IMR-90 (cell line): ENCODE measurements at regions of chr21 and their contacts with region 1.

Region 1: DNA sequence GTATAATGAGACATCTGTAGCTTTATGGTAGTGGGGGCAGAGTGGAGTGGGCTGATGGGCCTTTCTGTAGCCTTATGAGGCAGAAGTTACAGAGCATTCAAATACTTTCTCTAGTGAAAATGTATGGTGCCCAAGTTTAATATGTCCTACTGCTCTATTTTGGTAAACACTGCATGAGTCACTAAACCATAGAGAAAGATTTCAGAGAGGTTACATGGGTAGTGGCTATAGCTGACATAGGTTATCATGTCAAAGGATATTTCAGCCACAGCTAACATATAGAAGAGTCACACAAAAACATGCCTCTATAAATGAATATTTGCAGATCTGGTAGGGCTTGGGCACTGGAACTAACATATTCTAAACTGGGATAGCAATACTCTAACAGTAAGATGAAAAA is 212.4 kb upstream of the USP25 start:
- DNase-seq: no peak
- ATAC-seq: no peak
- H3K4me3 ChIP-seq: no peak overlapping the region
- H3K27ac ChIP-seq: no peak overlapping the region
- H3K4me1 ChIP-seq: no peaks in the 10 kb centered on the region
- H3K27me3 ChIP-seq: no peaks in the 10 kb centered on the region
- CTCF ChIP-seq: no peak
- POLR2A ChIP-seq: no peak
- RAD21 ChIP-seq: no peak

Region 2: DNA sequence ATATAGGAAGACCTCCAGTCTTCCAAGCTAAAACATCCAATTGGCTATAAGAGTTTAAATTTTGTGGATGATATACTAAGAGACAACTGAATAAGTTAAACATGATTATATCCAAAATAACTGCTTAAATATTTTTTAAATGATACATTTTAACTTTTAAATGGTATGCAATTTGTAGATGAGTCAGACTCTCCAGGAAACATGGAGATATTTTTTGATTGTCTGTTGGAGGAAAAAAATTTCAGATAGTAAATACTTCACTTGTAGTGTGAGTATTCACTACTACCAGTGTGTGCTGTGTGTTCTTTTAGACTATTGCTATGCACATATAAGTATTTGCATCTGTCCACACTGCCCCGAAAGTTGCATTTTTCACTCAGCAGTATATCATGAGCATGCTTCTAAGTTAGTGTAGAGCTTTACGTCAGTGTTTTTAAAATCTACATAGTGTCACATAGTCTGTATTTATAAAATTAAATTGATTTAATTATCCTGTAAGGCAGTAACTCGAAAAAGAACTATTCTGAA is 303.5 kb after region 1 on chr21:
- CTCF ChIA-PET with region 1: no interaction called
- POLR2A ChIA-PET with region 1: no interaction called
- dilution Hi-C with region 1: no loop called
- in situ Hi-C with region 1: no loop called
- intact Hi-C with region 1: loop called (anchors 5 kb)
- DNase-seq: peak; percentile 47
- ATAC-seq: peak; percentile 69
- H3K4me3 ChIP-seq: no peak overlapping the region
- H3K27ac ChIP-seq: no peak overlapping the region
- H3K4me1 ChIP-seq: no peaks in the 10 kb centered on the region
- H3K27me3 ChIP-seq: no peaks in the 10 kb centered on the region
- CTCF ChIP-seq: no peak
- POLR2A ChIP-seq: no peak
- RAD21 ChIP-seq: no peak